Sigmoid colon (tissue), 7 donors: ENCODE measurements at regions of chr4 and their contacts with region 1.

Region 1: DNA sequence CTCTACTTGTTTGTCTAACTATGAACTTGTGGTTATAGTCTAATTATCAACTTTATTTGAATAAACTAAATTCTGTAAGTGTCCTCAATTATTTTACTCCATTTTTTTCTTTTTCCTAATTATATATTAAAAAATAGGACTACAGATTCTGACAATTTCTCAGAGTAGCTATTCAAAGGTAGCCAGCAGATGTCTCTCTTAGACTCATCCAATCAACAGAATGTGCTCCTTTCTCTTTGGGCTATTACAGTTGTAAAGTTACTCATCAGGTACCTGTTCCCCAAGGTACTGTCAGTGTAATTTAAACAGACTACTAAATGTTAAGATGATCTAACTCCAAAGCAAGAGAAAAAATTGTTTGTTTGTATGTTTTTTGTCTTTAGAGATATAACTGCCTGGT is 248.6 kb downstream of the PCDH18 start:
- DNase-seq: no peak
- H3K4me3 ChIP-seq: no peak overlapping the region
- H3K27ac ChIP-seq: no peak overlapping the region
- H3K4me1 ChIP-seq: no peaks in the 10 kb centered on the region
- H3K27me3 ChIP-seq: no peaks in the 10 kb centered on the region
- CTCF ChIP-seq: peak in 2 of 4 experiments; percentile 29
- EP300 ChIP-seq: no peak
- POLR2A ChIP-seq: no peak

Region 2: DNA sequence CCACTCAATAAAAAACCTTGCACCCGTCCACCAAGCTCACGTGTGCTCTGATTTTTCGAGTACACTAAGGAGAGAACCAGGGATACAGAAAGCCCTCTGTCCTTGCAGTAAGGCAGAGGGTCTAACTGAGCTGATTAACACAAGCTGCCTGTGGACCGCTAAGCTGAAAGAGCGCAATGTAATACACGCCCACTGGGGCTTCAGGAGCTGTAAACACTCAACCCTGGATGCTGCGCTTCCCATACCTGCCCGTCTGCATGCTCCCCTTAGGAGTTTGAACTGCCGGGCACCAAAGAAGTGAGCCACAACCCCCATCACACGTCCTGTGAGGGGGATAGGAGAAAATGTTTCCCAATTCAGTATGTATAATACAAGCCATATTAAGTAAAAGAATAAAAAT is 416.3 kb before region 1 on chr4:
- intact Hi-C with region 1: no loop called
- DNase-seq: no peak
- H3K4me3 ChIP-seq: no peak overlapping the region
- H3K27ac ChIP-seq: no peak overlapping the region
- H3K4me1 ChIP-seq: peaks cover 0 to 12% (median 0%) of the 10 kb centered on the region in 4 donors
- H3K27me3 ChIP-seq: no peaks in the 10 kb centered on the region
- CTCF ChIP-seq: no peak
- EP300 ChIP-seq: no peak
- POLR2A ChIP-seq: no peak

Region 3: GRCh38 chr4:137861682-137862081 is 577.9 kb after region 1 on chr4:
- intact Hi-C with region 1: loop called (anchors 5 kb)
- DNase-seq: no peak
- H3K4me3 ChIP-seq: no peak overlapping the region
- H3K27ac ChIP-seq: no peak overlapping the region
- H3K4me1 ChIP-seq: no peaks in the 10 kb centered on the region
- H3K27me3 ChIP-seq: no peaks in the 10 kb centered on the region
- CTCF ChIP-seq: peak in 3 of 4 experiments; percentile 11 to 47 (median 20)
- EP300 ChIP-seq: no peak
- POLR2A ChIP-seq: no peak

Region 4: DNA sequence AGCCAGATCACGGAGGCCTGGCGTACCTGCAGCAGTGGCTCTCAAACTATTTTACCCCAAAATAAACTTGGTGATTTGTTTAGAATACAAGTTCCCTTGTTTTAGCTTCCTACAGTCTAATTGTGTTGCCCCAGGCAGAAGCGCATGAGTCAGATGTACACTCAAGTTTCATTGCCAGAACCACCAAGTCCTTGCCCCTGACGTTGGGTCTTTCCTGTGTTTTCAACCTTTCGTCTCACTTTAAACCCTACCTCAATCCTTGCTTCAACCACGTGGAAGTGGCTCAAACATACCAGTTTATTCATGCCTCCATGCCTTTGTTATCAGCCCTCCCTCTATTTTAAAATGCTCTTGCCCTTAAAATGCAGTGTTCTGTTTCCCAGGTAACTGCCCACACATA is 1024.7 kb after region 1 on chr4:
- intact Hi-C with region 1: no loop called
- DNase-seq: no peak
- H3K4me3 ChIP-seq: no peak overlapping the region
- H3K27ac ChIP-seq: no peak overlapping the region
- H3K4me1 ChIP-seq: no peaks in the 10 kb centered on the region
- H3K27me3 ChIP-seq: no peaks in the 10 kb centered on the region
- CTCF ChIP-seq: no peak
- EP300 ChIP-seq: no peak
- POLR2A ChIP-seq: no peak